Head of caudate nucleus (tissue), 42 donors: ENCODE measurements at regions of chr4 and their contacts with region 1.

Region 1: DNA sequence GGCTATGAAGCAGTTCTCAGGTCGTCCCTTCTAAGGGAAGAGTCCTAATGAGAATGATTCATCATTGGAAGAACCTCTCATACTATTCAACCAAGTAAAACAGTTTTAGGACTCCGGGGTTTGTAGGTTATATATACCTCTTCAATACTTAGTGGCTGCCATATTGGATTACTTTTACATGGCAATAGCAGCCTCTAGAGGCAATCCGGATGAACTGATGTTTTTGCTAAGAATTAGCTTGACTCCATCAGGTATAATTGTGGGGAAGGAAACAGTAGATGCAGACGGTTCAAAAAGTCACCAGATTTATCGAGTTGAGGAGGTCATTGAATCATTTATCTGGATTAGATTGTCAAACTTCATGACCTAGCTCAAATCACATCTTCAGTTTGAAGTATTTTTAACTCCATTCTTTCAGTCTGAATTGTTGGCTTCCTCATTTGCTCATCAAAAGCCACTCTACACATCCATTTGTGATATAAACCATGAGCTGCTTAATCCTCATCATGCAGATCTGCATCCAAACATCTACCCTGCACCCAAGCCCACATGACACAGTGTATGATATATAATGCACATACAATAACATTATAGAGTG is 28.4 kb downstream of the GUCY1B1 start:
- DNase-seq: peak in 3 of 42 donors; percentile 13 to 63 (median 59)

Region 2: GRCh38 chr4:155442267-155443105 is 344.7 kb before region 1 on chr4:
- intact Hi-C with region 1: loop called (anchors 5 kb)
- DNase-seq: peak; percentile 60 to 95 (median 88)

Region 3: GRCh38 chr4:155639704-155640523 is 147.3 kb before region 1 on chr4:
- intact Hi-C with region 1: no loop called
- DNase-seq: peak in 1 of 42 donors; percentile 4